Sigmoid colon (tissue), 7 donors: ENCODE measurements at regions of chr2 and their contacts with region 1.

Region 1: GRCh38 chr2:160453111-160453820 is 40.3 kb downstream of the RBMS1 start:
- DNase-seq: no peak
- H3K4me3 ChIP-seq: no peak overlapping the region
- H3K27ac ChIP-seq: peak overlapping the region in 1 of 4 donors; percentile 9
- H3K4me1 ChIP-seq: peaks cover 0 to 47% (median 31%) of the 10 kb centered on the region in 4 donors
- H3K27me3 ChIP-seq: no peaks in the 10 kb centered on the region
- CTCF ChIP-seq: no peak
- EP300 ChIP-seq: no peak
- POLR2A ChIP-seq: no peak

Region 2: GRCh38 chr2:160522951-160523710 is 69.9 kb after region 1 on chr2:
- intact Hi-C with region 1: loop called (anchors 2 kb)
- DNase-seq: no peak
- H3K4me3 ChIP-seq: no peak overlapping the region
- H3K27ac ChIP-seq: no peak overlapping the region
- H3K4me1 ChIP-seq: peaks cover 0 to 7% (median 0%) of the 10 kb centered on the region in 4 donors
- H3K27me3 ChIP-seq: no peaks in the 10 kb centered on the region
- CTCF ChIP-seq: no peak
- EP300 ChIP-seq: no peak
- POLR2A ChIP-seq: no peak